ENCODE measurements at regions of chr9 and their contacts with region 1.

Region 1: DNA sequence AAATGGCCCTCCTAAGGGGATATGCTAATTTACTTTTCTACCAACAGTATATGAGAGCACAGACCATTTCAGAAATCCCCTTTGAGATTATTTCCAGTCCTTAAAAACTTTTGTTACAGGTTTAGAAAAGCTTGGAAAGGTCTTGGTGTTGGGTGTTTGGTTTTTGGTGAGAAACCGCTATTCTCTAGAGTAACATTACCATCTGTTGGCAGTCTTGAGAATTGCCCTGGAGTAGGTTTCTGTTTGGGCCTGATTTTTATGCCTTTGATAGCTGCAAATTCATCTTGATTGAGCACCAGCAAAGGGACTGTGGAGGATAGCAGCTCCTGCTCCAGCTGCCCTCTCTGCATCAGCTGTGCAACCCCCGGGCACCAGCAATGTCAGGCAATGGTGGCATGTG is 8.0 kb downstream of the NUDT2 start:
- DNase-seq: no peak
- H3K4me3 ChIP-seq: no peak overlapping the region
- H3K27ac ChIP-seq: no peak overlapping the region
- H3K4me1 ChIP-seq: peaks cover 0 to 11% of the 10 kb centered on the region in 2 donors
- H3K27me3 ChIP-seq: no peaks in the 10 kb centered on the region
- CTCF ChIP-seq: no peak
- POLR2A ChIP-seq: no peak

Region 2: GRCh38 chr9:34025062-34025461 is 312.3 kb before region 1 on chr9:
- intact Hi-C with region 1: no loop called
- DNase-seq: no peak
- H3K4me3 ChIP-seq: no peak overlapping the region
- H3K27ac ChIP-seq: no peak overlapping the region
- H3K4me1 ChIP-seq: peaks cover 5 to 17% of the 10 kb centered on the region in 2 donors
- H3K27me3 ChIP-seq: no peaks in the 10 kb centered on the region
- CTCF ChIP-seq: no peak
- POLR2A ChIP-seq: no peak

Region 3: GRCh38 chr9:34376596-34377403 is 39.4 kb after region 1 on chr9 and contains the start of gene MYORG:
- intact Hi-C with region 1: loop called (anchors 2 to 5 kb)
- DNase-seq: peak; percentile 96 to 99 (median 98)
- H3K4me3 ChIP-seq: peak within 1 kb of the TSS in 3 of 4 donors; percentile 20 to 59 (median 46)
- H3K27ac ChIP-seq: peak within 1 kb of the TSS; percentile 18 to 80 (median 46)
- H3K4me1 ChIP-seq: peaks cover 10 to 33% of the 10 kb centered on the region in 2 donors
- H3K27me3 ChIP-seq: no peaks in the 10 kb centered on the region
- CTCF ChIP-seq: no peak
- POLR2A ChIP-seq: peak; percentile 36 to 87
- total RNA-seq, gene MYORG: 3.5 to 33.8 (median 14.9) TPM

Measured in adrenal gland (tissue), 19 donors.